ENCODE measurements at regions of chr16 and their contacts with region 1.

Region 1: DNA sequence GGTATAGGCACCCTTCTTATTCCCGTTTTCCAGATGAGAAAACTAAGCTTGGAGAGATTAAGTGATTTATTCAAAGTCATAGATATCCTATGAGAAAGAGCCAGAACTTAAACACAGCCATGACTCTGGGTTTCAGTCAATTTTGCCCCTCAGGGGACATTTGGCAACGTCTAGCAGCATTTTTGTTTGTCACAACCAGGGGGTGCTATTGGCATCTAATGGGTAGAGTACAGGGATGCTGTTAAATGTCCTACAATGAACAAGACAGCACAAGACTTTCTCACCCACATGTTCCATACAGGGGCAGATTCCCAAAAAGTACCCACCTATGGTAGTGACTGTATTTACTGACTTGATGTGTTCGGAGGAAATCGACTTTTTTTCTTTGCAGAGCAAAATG is 4.8 kb upstream of the SHISA9 start:
- DNase-seq: peak; percentile 74
- ATAC-seq: peak; percentile 83
- H3K4me3 ChIP-seq: no peak overlapping the region
- H3K27ac ChIP-seq: no peak overlapping the region
- H3K4me1 ChIP-seq: no peaks in the 10 kb centered on the region
- H3K27me3 ChIP-seq: peaks cover 5 to 28% of the 10 kb centered on the region in 2 experiments; a peak in 4 of 5 replicates
- CTCF ChIP-seq: peak; percentile 89
- EP300 ChIP-seq: no peak
- POLR2A ChIP-seq: no peak
- RAD21 ChIP-seq: peak; percentile 79

Region 2: GRCh38 chr16:13110124-13110796 is 213.7 kb after region 1 on chr16:
- CTCF ChIA-PET with region 1: no interaction called
- POLR2A ChIA-PET with region 1: no interaction called
- in situ Hi-C with region 1: no loop called
- intact Hi-C with region 1: loop called (anchors 5 kb)
- DNase-seq: peak; percentile 99
- ATAC-seq: peak; percentile 98
- H3K4me3 ChIP-seq: peak overlapping the region in 1 of 3 experiments; percentile 32; a peak in 1 of 6 replicates
- H3K27ac ChIP-seq: peak overlapping the region; percentile 69
- H3K4me1 ChIP-seq: peaks cover 41% of the 10 kb centered on the region
- H3K27me3 ChIP-seq: no peaks in the 10 kb centered on the region
- CTCF ChIP-seq: peak; percentile 10; the same call in 1 of the 2 replicates
- EP300 ChIP-seq: peak; percentile 90 to 96; a peak in 3 of 4 replicates
- POLR2A ChIP-seq: peak in 1 of 2 experiments; percentile 56; a peak in 2 of 4 replicates
- RAD21 ChIP-seq: peak; percentile 26; the same call in 1 of the 2 replicates

Region 3: GRCh38 chr16:13136926-13137325 is 240.4 kb after region 1 on chr16:
- CTCF ChIA-PET with region 1: no interaction called
- POLR2A ChIA-PET with region 1: no interaction called
- in situ Hi-C with region 1: no loop called
- intact Hi-C with region 1: no loop called
- DNase-seq: no peak
- ATAC-seq: no peak
- H3K4me3 ChIP-seq: no peak overlapping the region
- H3K27ac ChIP-seq: no peak overlapping the region
- H3K4me1 ChIP-seq: no peaks in the 10 kb centered on the region
- H3K27me3 ChIP-seq: no peaks in the 10 kb centered on the region
- CTCF ChIP-seq: no peak
- EP300 ChIP-seq: no peak
- POLR2A ChIP-seq: no peak
- RAD21 ChIP-seq: no peak

Region 4: DNA sequence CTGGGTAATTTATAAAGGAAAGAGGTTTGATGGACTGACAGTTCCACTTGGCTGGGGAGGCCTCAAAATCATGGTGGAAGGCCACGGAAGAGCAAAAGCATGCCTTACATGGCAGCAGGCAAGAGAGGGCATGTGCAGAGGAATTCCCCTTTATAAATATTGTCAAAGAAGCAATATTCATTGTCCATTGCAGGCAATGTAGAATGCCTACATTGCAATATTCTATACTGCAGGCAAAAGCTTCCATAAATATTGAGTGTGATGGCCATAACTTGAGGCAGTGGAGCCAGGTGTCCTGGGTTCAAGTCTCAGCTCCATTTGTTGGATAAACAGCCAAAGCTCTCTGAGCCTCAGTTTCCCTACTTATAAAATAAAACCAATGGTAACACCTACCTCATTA is 327.1 kb after region 1 on chr16:
- CTCF ChIA-PET with region 1: no interaction called
- POLR2A ChIA-PET with region 1: no interaction called
- in situ Hi-C with region 1: no loop called
- intact Hi-C with region 1: loop called (anchors 5 kb)
- DNase-seq: no peak
- ATAC-seq: no peak
- H3K4me3 ChIP-seq: no peak overlapping the region
- H3K27ac ChIP-seq: no peak overlapping the region
- H3K4me1 ChIP-seq: no peaks in the 10 kb centered on the region
- H3K27me3 ChIP-seq: no peaks in the 10 kb centered on the region
- CTCF ChIP-seq: no peak
- EP300 ChIP-seq: no peak
- POLR2A ChIP-seq: no peak
- RAD21 ChIP-seq: no peak

Region 5: GRCh38 chr16:13453938-13454553 is 557.5 kb after region 1 on chr16:
- CTCF ChIA-PET with region 1: interaction called, 42 read pairs
- POLR2A ChIA-PET with region 1: no interaction called
- in situ Hi-C with region 1: no loop called
- intact Hi-C with region 1: loop called (anchors 1 kb)
- DNase-seq: peak; percentile 38
- ATAC-seq: peak; percentile 65
- H3K4me3 ChIP-seq: no peak overlapping the region
- H3K27ac ChIP-seq: no peak overlapping the region
- H3K4me1 ChIP-seq: no peaks in the 10 kb centered on the region
- H3K27me3 ChIP-seq: no peaks in the 10 kb centered on the region
- CTCF ChIP-seq: peak; percentile 83
- EP300 ChIP-seq: no peak
- POLR2A ChIP-seq: no peak
- RAD21 ChIP-seq: no peak; the same call in 1 of the 2 replicates